ENCODE measurements at regions of chr17 and their contacts with region 1.

Region 1: DNA sequence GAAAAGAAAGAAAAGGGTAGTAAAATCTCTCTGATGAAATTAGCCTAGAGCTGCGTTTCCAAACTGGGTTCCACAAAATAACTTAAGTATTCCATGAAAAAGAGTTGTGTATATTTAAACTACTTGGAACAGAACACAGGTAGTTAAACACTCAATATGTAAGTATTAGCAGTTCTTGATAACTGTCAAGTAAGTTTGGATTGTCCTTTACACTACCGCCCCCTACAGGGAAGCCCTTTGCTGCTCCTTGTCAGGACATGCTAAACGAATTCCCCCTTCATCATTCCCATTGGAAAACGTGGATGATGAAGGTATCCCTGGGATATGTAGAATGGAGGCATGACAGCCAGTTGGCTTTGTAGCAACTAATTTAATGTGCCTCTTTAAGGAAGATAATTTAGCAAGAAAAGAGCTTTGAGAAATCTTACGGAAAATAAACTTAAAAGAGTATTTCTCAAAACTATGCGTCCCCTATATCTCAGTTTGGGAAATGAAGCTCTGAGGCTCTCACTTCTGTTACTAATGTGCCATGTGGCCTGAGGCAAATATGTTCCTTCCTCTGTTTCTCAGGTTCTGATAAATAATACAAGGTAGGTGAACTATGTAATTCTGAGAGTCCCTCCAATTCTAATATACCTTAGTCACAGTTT is 18.8 kb downstream of the NCBP3 start:
- DNase-seq: peak; percentile 83
- ATAC-seq: peak; percentile 47
- H3K4me3 Mint-ChIP-seq: no peak overlapping the region
- H3K27ac Mint-ChIP-seq: no peak overlapping the region
- H3K4me1 Mint-ChIP-seq: peaks cover 19% of the 10 kb centered on the region
- H3K27me3 Mint-ChIP-seq: no peaks in the 10 kb centered on the region

Region 2: GRCh38 chr17:3723556-3724369 is 103.5 kb before region 1 on chr17 and contains the start of gene HASPIN:
- CTCF ChIA-PET with region 1: interaction called, 18 read pairs
- DNase-seq: peak; percentile 94
- ATAC-seq: peak; percentile 94
- H3K4me3 Mint-ChIP-seq: peak within 1 kb of the TSS; percentile 95
- H3K27ac Mint-ChIP-seq: peak within 1 kb of the TSS; percentile 89
- H3K4me1 Mint-ChIP-seq: peaks cover 63% of the 10 kb centered on the region
- H3K27me3 Mint-ChIP-seq: no peaks in the 10 kb centered on the region
- total RNA-seq, gene HASPIN: 30.4 to 31.2 TPM

Region 3: GRCh38 chr17:3762922-3763776 is 64.1 kb before region 1 on chr17:
- CTCF ChIA-PET with region 1: interaction called, 11 read pairs
- DNase-seq: peak; percentile 86
- ATAC-seq: peak; percentile 73
- H3K4me3 Mint-ChIP-seq: peak overlapping the region; percentile 65
- H3K27ac Mint-ChIP-seq: peak overlapping the region; percentile 96
- H3K4me1 Mint-ChIP-seq: peaks cover 73% of the 10 kb centered on the region
- H3K27me3 Mint-ChIP-seq: no peaks in the 10 kb centered on the region

Region 4: DNA sequence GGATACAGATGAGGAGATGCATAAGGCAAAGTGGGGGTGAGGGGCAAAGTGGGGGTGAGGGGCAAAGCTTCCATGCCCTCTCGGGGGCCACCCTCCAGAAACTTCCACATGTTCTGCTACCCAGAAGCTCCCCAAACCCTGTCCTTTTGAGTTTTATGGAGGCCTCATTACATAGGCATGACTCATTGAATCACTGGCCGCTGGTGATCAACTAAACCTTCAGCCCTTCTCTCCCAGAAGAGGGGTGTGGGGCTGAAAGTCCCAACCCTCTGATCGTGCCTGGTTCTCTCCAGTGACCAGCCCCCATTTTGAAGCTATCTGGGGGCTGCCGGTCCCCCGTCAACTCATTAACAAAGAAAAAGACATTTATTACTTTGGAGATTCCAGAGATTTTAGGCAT is 53.7 kb before region 1 on chr17:
- CTCF ChIA-PET with region 1: interaction called, 14 read pairs
- DNase-seq: no peak
- ATAC-seq: no peak
- H3K4me3 Mint-ChIP-seq: no peak overlapping the region
- H3K27ac Mint-ChIP-seq: peak overlapping the region; percentile 38
- H3K4me1 Mint-ChIP-seq: peaks cover 42% of the 10 kb centered on the region
- H3K27me3 Mint-ChIP-seq: no peaks in the 10 kb centered on the region

Region 5: GRCh38 chr17:3845621-3846441 is 18.6 kb after region 1 on chr17 and contains the start of gene NCBP3:
- CTCF ChIA-PET with region 1: interaction called, 65 read pairs
- DNase-seq: peak; percentile 92
- ATAC-seq: peak; percentile 95
- H3K4me3 Mint-ChIP-seq: peak within 1 kb of the TSS; percentile 98
- H3K27ac Mint-ChIP-seq: peak within 1 kb of the TSS; percentile 94
- H3K4me1 Mint-ChIP-seq: peaks cover 25% of the 10 kb centered on the region
- H3K27me3 Mint-ChIP-seq: peaks cover 12% of the 10 kb centered on the region
- total RNA-seq, gene NCBP3: 46.3 to 48.7 TPM

Measured in activated CD8-positive, alpha-beta memory T cell treated with anti-CD3 and anti-CD28 coated beads, Interleukin-2, amount 10 ng/mL, durations not matched to agents 7 days and 5 days (primary cell).